ENCODE measurements at regions of chr3 and their contacts with region 1.

Region 1: DNA sequence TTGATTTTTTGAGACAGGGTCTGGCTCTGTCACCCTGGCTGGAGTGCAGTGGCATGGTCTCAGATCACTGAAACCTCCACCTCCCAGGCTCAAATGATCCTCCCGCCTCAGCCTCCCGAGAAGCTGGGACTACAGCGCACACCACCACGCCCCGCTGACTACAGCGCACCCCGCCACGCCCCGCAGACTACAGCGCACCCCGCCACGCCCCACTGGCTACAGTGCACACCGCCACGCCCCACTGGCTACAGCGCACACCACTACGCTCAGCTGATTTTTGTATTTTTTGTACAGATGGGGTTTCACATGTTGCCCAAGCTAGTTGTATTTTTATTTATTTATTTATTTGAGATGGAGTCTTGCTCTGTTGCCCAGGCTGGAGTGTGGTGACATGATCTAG is 35.6 kb downstream of the SLC51A start:
- DNase-seq: no peak
- H3K4me3 ChIP-seq: no peak overlapping the region
- H3K27ac ChIP-seq: no peak overlapping the region
- H3K4me1 ChIP-seq: no peaks in the 10 kb centered on the region
- H3K27me3 ChIP-seq: no peaks in the 10 kb centered on the region
- CTCF ChIP-seq: no peak

Region 2: GRCh38 chr3:196524527-196524926 is 272.6 kb after region 1 on chr3:
- intact Hi-C with region 1: loop called (anchors 5 kb)
- DNase-seq: no peak
- H3K4me3 ChIP-seq: no peak overlapping the region
- H3K27ac ChIP-seq: no peak overlapping the region
- H3K4me1 ChIP-seq: peaks cover 0 to 8% (median 2%) of the 10 kb centered on the region in 4 donors
- H3K27me3 ChIP-seq: no peaks in the 10 kb centered on the region
- CTCF ChIP-seq: no peak

Measured in tibial artery (tissue), 4 donors.